Endothelial cell of umbilical vein (primary cell): ENCODE measurements at regions of chr18 and their contacts with region 1.

Region 1: GRCh38 chr18:77101410-77102258 is 30.9 kb downstream of the MBP start:
- DNase-seq: peak; percentile 91
- H3K4me3 ChIP-seq: peak overlapping the region in 1 of 3 experiments; percentile 6
- H3K27ac ChIP-seq: peak overlapping the region; percentile 96
- H3K4me1 ChIP-seq: peaks cover 45% of the 10 kb centered on the region
- H3K27me3 ChIP-seq: no peaks in the 10 kb centered on the region
- CTCF ChIP-seq: no peak
- POLR2A ChIP-seq: peak; percentile 52

Region 2: DNA sequence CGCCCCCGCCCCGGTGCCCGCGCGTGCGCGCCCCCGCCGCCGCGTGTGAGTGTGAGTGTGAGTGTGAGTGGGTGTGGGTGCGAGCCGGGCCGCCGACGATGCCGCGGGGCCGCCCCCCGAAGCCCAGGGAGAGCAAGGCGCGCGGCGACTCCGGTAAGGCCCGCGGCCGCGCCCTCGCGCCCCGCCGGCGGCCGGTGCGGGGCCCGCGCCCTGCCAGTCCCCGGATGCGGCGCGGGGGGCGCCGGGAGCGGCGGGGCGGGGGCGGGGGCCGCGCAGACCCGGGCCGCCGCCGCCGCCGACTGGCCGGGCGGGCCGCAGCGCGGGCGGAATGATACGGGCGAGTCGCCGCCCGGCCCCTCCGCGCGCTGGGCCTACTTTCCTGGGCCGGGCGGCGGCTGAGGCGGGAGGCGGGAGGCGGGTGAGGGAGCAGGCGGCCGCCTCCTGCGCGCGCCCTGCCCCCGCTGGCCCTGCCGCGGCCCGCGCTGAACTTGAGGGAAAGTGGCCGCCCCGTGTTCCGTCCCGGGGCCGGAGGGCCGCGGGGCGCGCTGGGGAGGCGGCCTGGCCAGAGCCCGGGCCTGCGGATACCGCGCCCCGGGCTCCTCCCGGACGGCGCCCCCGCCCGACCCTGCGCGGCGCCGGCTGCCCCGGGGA is 279.0 kb before region 1 on chr18 and contains the start of gene ZNF236:
- CTCF ChIA-PET with region 1: no interaction called
- POLR2A ChIA-PET with region 1: no interaction called
- dilution Hi-C with region 1: no loop called
- intact Hi-C with region 1: loop called (anchors 5 kb)
- DNase-seq: peak; percentile 44
- H3K4me3 ChIP-seq: peak within 1 kb of the TSS; percentile 54 to 98 (median 75)
- H3K27ac ChIP-seq: peak within 1 kb of the TSS; percentile 63
- H3K4me1 ChIP-seq: peaks cover 25% of the 10 kb centered on the region
- H3K27me3 ChIP-seq: no peaks in the 10 kb centered on the region
- CTCF ChIP-seq: no peak
- POLR2A ChIP-seq: peak; percentile 73
- total RNA-seq, gene ZNF236: 13.6 and 14.7 TPM in 2 replicates

Region 3: DNA sequence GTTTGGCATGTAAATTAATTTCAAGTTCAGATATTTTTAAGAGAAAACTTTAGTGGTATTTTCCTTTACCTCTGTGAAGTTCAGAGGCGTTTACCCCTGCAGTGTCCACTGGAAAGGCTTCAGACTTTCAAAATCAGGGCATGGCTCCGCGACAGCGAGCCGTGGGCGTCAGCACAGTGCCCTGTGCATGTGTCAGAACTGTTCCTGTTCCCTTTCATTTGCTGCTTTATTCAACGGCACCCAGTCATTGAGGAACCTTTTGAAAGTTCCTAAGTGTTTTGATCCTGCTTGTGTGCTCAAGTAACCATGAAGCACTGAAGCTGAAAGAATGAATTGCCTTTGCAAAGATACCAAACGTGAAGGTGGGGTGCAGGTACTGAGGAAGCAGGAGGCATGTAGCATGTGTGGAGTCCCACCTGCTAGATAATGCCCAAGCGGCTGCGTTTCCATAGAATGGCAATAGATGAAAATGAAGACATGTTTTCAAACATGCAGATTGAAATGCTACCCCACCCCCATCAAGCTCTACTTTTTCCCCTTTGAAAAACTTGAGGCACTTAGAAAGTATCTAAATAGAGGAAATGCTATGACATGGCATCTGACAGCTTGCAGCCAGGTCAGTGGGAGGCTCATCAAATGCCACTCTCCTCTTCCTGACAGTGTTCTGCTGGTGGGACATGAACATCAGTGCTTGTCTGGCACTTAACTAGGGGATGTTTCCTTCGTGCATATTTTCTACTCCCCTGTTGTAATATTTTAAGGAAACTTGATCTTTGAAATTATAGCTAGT is 130.7 kb before region 1 on chr18:
- CTCF ChIA-PET with region 1: no interaction called
- POLR2A ChIA-PET with region 1: no interaction called
- dilution Hi-C with region 1: no loop called
- intact Hi-C with region 1: no loop called
- DNase-seq: no peak
- H3K4me3 ChIP-seq: no peak overlapping the region
- H3K27ac ChIP-seq: no peak overlapping the region
- H3K4me1 ChIP-seq: no peaks in the 10 kb centered on the region
- H3K27me3 ChIP-seq: no peaks in the 10 kb centered on the region
- CTCF ChIP-seq: no peak
- POLR2A ChIP-seq: no peak

Region 4: DNA sequence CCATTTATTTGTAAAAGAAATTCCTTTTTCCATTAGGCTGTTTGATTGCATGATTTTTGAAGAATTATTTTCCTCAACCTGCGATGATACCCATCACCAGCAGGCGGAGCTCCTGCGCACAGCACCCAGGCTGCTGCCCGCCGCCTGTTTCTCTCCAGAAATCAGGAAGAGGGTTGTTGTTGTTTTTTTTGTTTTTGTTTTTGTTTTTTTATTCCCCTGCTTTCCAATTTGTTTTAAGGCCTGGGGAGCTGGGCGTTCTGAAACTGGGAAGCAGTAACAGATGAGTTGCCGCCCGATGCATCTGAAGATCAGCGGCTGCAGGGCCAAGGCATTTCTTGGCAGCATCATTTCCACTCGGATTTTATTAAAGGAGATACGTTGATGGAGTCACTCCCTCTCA is 101.1 kb before region 1 on chr18:
- CTCF ChIA-PET with region 1: interaction called, 5 read pairs
- POLR2A ChIA-PET with region 1: no interaction called
- dilution Hi-C with region 1: no loop called
- intact Hi-C with region 1: loop called (anchors 5 kb)
- DNase-seq: peak; percentile 46
- H3K4me3 ChIP-seq: no peak overlapping the region
- H3K27ac ChIP-seq: no peak overlapping the region
- H3K4me1 ChIP-seq: no peaks in the 10 kb centered on the region
- H3K27me3 ChIP-seq: peaks cover 1 to 8% of the 10 kb centered on the region in 2 experiments
- CTCF ChIP-seq: peak; percentile 90 to 94
- POLR2A ChIP-seq: no peak

Region 5: DNA sequence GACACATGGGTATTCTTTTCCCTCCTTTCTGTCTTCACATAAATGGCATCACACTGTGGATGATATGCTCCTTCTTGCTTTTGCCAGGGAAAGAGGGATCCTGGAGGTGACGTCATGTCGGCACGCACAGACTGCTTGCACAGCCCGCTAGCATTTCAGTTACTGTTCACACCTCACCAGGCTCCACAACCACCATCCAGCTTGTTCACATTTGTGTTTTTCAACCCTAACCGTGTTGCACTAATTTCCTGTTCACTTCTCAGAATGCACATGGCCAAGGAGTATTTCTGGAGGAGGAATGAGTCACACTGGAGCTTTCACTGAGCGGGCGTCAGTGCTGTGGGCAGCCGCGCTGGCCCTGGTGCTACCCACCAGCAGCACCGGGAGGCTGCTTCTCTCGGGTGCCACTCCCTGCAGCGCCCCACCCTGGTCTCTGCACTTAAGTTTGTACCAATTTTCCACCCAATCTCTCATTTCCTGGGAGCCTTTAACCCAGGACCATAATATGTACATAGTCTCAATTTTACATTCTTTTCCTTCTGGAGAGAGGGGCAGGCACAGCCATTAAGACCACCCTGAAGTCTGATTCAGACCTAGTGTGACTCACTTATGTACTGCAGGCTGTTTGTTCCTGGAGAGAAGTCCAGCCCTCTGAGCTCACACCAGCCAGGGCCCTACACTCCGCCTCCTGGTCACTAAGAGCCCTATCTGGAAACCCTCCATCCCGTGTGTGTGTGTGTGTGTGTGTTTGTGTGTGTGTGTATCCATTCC is 34.2 kb before region 1 on chr18:
- CTCF ChIA-PET with region 1: interaction called, 14 read pairs
- POLR2A ChIA-PET with region 1: interaction called, 5 read pairs
- dilution Hi-C with region 1: no loop called
- intact Hi-C with region 1: loop called (anchors 1 kb)
- DNase-seq: peak; percentile 86
- H3K4me3 ChIP-seq: peak overlapping the region in 1 of 3 experiments; percentile 2
- H3K27ac ChIP-seq: peak overlapping the region; percentile 79
- H3K4me1 ChIP-seq: peaks cover 66% of the 10 kb centered on the region
- H3K27me3 ChIP-seq: no peaks in the 10 kb centered on the region
- CTCF ChIP-seq: no peak
- POLR2A ChIP-seq: no peak

Region 6: DNA sequence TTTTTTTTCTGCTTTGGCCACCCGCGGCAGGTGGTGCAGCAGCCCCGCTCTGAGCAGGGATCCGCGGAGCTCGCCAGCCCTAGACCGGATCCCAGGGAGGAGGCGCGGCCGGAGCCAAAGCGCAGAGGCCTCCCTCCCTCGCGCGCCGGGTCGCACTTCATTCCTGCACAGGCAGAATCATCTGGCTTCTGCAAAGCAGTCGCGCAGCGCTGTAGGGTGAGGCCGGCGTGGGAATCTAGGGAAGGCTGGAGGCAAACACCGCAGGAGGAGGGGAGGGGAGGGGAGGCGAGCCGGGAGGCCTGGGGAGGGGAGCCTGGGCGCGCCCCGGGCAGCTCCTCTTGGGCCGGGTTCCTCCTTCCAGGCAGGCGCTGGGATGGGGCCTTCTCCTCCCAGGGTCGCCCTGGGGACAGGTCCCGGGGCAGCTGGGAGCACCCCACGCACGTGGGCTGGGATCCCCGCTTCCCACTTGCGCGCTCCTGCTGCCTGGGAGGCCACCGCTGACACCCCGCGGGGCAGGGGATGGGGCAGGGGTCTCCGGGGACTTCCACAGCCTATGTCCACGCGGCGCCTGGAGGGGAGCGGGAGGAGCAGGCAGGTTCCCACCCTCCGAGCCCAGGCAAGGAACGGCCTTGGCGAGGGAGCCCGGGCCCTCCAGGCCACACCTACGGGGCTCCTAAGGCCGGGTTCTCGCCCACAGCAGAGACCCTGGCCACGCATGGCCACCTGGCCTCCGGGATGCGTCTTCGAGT is 14.1 kb before region 1 on chr18:
- CTCF ChIA-PET with region 1: interaction called, 7 read pairs
- POLR2A ChIA-PET with region 1: no interaction called
- dilution Hi-C with region 1: no loop called
- intact Hi-C with region 1: loop called (anchors 1 kb)
- DNase-seq: peak; percentile 37
- H3K4me3 ChIP-seq: peak overlapping the region; percentile 6 to 49 (median 40)
- H3K27ac ChIP-seq: peak overlapping the region; percentile 74
- H3K4me1 ChIP-seq: peaks cover 13% of the 10 kb centered on the region
- H3K27me3 ChIP-seq: no peaks in the 10 kb centered on the region
- CTCF ChIP-seq: no peak
- POLR2A ChIP-seq: no peak

Region 7: GRCh38 chr18:77114415-77115191 is 13.0 kb after region 1 on chr18:
- CTCF ChIA-PET with region 1: interaction called, 10 read pairs
- POLR2A ChIA-PET with region 1: no interaction called
- dilution Hi-C with region 1: no loop called
- intact Hi-C with region 1: loop called (anchors 1 kb)
- DNase-seq: peak; percentile 82
- H3K4me3 ChIP-seq: no peak overlapping the region
- H3K27ac ChIP-seq: peak overlapping the region; percentile 18
- H3K4me1 ChIP-seq: peaks cover 17% of the 10 kb centered on the region
- H3K27me3 ChIP-seq: no peaks in the 10 kb centered on the region
- CTCF ChIP-seq: no peak
- POLR2A ChIP-seq: no peak

Region 8: DNA sequence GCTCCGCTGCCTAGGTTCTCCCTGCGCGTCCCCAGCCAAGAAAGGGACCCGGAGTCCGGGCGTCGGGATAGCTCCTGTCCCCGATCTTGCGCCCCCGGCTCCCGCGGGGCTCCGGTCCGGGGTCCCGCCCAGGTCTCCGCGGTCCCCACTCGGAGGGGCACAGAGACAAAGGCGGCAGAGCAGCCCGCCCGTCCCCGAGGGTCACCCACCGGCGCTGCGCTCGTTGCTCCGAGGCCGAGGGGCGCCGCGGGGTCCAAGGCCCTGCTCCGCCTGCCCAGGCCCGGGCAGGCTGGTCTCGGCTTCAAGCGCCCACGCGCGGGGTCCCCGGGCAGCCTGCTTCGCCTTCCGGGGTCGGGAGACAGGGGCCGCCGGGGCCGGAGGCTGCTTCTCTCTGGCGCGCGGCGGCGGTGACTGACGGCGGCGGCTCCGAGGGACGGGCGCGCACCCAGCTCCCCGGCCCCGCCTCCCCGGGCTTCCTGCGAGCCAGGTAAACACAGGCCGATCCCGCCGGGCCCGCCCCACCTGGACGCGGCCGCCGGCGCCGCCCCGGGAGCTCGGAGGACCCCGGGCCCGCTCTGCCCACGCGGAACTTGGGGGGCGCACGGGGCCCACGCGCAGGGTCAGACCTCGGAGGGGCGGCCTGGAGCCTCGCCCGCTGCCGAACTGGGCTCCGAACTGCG is 30.9 kb after region 1 on chr18 and contains the start of gene MBP:
- CTCF ChIA-PET with region 1: interaction called, 7 read pairs
- POLR2A ChIA-PET with region 1: no interaction called
- dilution Hi-C with region 1: no loop called
- intact Hi-C with region 1: loop called (anchors 1 kb)
- DNase-seq: no peak
- H3K4me3 ChIP-seq: peak within 1 kb of the TSS; percentile 44 to 48 (median 46)
- H3K27ac ChIP-seq: no peak within 1 kb of the TSS
- H3K4me1 ChIP-seq: peaks cover 13% of the 10 kb centered on the region
- H3K27me3 ChIP-seq: peaks cover 4 to 28% of the 10 kb centered on the region in 2 experiments
- CTCF ChIP-seq: no peak
- POLR2A ChIP-seq: no peak
- total RNA-seq, gene MBP: 1.7 and 4.0 TPM in 2 replicates